ENCODE measurements at regions of chr6 and their contacts with region 1.

Region 1: DNA sequence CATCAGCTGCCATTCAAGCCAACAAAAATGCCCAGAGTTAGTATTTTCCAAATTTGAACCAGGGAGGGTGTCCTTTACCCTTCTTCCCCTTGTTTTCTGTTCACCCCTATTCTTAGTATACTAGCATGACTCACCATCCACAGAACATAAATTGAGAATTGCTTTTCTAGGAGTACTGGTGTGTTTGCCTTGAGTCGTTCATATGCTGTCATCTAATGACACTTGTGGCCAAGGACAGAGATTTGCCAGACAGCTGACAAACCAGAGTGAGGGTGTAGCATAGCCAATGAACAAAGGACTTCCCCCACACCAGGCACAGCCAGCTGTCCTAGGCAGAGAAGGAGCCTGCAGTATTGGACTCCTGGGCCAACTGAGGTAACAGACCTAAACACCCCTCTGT is 62.2 kb downstream of the FILIP1 start:
- DNase-seq: peak; percentile 83 to 85
- ATAC-seq: peak; percentile 98 to 99
- H3K4me3 ChIP-seq: no peak overlapping the region
- H3K27ac ChIP-seq: peak overlapping the region; percentile 75 to 93 (median 83)
- H3K4me1 ChIP-seq: peaks cover 68 to 70% of the 10 kb centered on the region in 2 donors
- H3K27me3 ChIP-seq: no peaks in the 10 kb centered on the region
- CTCF ChIP-seq: no peak
- POLR2A ChIP-seq: peak in 1 of 2 donors; percentile 30

Region 2: GRCh38 chr6:75381877-75382633 is 49.3 kb before region 1 on chr6:
- in situ Hi-C with region 1: no loop called
- intact Hi-C with region 1: no loop called
- DNase-seq: no peak
- ATAC-seq: no peak
- H3K4me3 ChIP-seq: no peak overlapping the region
- H3K27ac ChIP-seq: peak overlapping the region; percentile 25 to 55 (median 40)
- H3K4me1 ChIP-seq: peaks cover 43 to 46% of the 10 kb centered on the region in 2 donors
- H3K27me3 ChIP-seq: no peaks in the 10 kb centered on the region
- CTCF ChIP-seq: no peak
- POLR2A ChIP-seq: no peak

Region 3: DNA sequence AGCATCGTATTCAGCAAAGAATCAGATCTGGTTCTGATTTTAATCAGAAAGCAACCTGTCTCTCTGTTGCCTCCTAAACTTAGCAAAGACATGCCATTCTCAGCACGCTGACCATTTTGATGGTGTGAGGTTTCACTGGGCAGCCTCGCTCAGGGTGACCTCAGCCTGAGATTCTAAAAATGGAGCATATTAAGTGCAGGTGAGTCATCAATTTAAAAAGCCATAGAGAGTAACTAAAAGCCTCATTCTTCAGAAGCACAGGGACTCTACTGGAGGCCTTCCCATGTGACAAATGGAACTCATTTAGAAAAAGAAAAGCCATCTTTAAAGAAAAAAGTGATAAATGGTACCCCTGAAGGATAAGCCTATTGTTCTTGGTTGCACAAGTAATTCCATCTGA is 29.1 kb before region 1 on chr6:
- in situ Hi-C with region 1: no loop called
- intact Hi-C with region 1: loop called (anchors 2 kb)
- DNase-seq: peak; percentile 69 to 83
- ATAC-seq: peak; percentile 95 to 97
- H3K4me3 ChIP-seq: peak overlapping the region in 1 of 4 donors; percentile 6
- H3K27ac ChIP-seq: peak overlapping the region; percentile 71 to 78 (median 75)
- H3K4me1 ChIP-seq: peaks cover 73 to 76% of the 10 kb centered on the region in 2 donors
- H3K27me3 ChIP-seq: no peaks in the 10 kb centered on the region
- CTCF ChIP-seq: no peak
- POLR2A ChIP-seq: no peak

Region 4: GRCh38 chr6:75493400-75494064 is 62.2 kb after region 1 on chr6 and contains the start of gene FILIP1:
- in situ Hi-C with region 1: loop called in 1 of 4 experiments (anchors 10 kb)
- intact Hi-C with region 1: loop called (anchors 2 kb)
- DNase-seq: peak; percentile 91 to 92
- ATAC-seq: peak; percentile 91 to 92
- H3K4me3 ChIP-seq: peak within 1 kb of the TSS; percentile 68 to 82 (median 76)
- H3K27ac ChIP-seq: peak within 1 kb of the TSS; percentile 93 to 98 (median 98)
- H3K4me1 ChIP-seq: peaks cover 50 to 55% of the 10 kb centered on the region in 2 donors
- H3K27me3 ChIP-seq: no peaks in the 10 kb centered on the region
- CTCF ChIP-seq: no peak
- POLR2A ChIP-seq: peak; percentile 88 to 98
- total RNA-seq, gene FILIP1: 57.5 to 123 (median 93.8) TPM